ENCODE measurements at regions of chr7 and their contacts with region 1.

Region 1: DNA sequence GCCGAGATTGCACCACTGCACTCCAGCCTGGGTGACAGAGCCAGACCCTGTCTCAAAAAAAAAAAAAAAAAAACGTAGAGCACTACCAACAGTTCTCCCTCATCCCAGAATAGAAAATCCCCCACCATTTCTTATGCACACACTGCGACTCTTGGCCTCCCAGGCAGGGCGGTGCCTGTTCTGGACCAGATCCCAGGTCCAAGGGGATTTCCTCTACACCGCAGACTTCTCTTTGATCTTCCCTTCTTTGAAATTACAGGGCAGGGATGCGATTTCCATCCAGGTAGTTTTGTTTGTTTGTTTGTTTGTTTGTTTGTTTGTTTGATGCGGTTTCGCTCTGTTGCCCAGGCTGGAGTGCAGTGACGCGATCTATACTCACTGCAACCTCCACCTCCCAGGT is 91.8 kb downstream of the SEPTIN14 start:
- DNase-seq: no peak
- H3K4me3 ChIP-seq: no peak overlapping the region
- H3K27ac ChIP-seq: no peak overlapping the region
- H3K27me3 ChIP-seq: no peaks in the 10 kb centered on the region
- CTCF ChIP-seq: no peak

Region 2: DNA sequence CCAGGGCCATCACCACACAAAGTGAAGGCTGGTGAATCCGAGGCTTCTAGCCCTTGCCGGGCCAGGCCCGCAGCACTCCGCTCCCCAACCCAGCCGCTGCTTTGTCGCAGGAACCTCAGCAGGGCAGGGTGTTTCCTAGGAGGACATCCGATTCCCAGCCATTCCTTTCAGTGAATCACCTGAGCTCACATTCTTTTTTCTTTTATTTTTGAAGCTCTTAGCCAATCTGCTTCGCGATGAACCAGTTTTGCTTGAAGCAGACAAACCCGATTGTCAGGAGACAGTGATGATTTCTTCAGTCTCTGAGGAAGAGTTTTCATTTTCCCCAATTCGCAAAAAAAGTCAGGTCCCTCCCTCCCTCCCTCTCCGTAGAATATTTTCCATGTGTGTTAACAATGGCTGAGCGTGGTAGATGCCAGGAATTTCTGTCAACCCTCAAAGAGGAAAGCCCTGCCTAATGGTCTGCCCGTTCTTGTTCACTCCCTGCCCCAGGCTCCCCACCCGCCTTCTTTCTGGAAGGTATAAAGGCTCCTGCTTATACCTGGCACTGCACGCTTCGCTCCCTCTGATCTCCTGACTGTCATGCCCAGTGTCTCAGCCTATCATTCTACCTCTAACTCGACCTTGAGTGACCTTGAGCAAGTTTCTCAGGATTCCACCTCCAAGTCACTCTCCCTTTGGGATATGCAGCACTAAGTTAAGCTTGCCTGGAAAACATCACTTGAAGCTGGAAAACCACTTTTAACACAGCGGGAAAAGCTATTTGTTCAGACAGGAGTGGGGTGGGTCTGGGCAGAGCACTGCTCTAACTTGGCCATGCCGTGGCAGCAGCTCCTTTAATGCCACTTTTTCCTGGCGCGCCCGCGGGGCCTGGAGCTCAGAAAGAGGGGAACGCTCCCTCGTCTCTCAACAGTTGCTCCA is 716.9 kb before region 1 on chr7:
- CTCF ChIA-PET with region 1: no interaction called
- POLR2A ChIA-PET with region 1: interaction called, 14 read pairs
- DNase-seq: no peak
- H3K4me3 ChIP-seq: no peak overlapping the region
- H3K27ac ChIP-seq: peak overlapping the region; percentile 93
- H3K27me3 ChIP-seq: no peaks in the 10 kb centered on the region
- CTCF ChIP-seq: no peak

Region 3: GRCh38 chr7:55784151-55784550 is 13.4 kb after region 1 on chr7:
- CTCF ChIA-PET with region 1: no interaction called
- POLR2A ChIA-PET with region 1: no interaction called
- DNase-seq: no peak
- H3K4me3 ChIP-seq: no peak overlapping the region
- H3K27ac ChIP-seq: no peak overlapping the region
- H3K27me3 ChIP-seq: peaks cover 2% of the 10 kb centered on the region
- CTCF ChIP-seq: no peak